Heart left ventricle (tissue), 16 donors: ENCODE measurements at regions of chr1 and their contacts with region 1.

Region 1: GRCh38 chr1:103025858-103026409 is 82.4 kb downstream of the COL11A1 start:
- DNase-seq: no peak
- ATAC-seq: no peak
- H3K4me3 ChIP-seq: no peak overlapping the region
- H3K27ac ChIP-seq: no peak overlapping the region
- H3K4me1 ChIP-seq: no peaks in the 10 kb centered on the region
- H3K27me3 ChIP-seq: no peaks in the 10 kb centered on the region
- CTCF ChIP-seq: no peak
- POLR2A ChIP-seq: no peak

Region 2: DNA sequence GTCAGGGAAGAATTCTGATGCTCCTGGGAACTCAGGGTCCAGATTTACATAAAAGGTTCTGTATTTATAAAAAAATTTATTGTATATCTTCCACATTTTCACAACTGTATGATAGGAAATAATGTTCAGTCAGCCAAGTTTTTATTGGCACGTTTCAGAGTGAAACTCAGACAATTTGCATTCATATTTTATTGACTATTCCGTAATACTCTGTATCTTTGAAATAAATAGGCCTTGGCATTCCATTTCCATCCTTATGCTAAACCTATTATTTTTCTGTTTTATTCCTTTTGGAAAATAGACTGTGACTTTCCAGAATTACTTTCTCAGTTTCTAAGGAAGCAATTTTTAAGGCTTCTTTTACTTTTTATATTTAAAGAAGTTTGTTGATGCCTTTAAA is 1358.2 kb before region 1 on chr1:
- intact Hi-C with region 1: loop called in 1 of 10 experiments (anchors 10 kb)
- DNase-seq: no peak
- ATAC-seq: no peak
- H3K4me3 ChIP-seq: no peak overlapping the region
- H3K27ac ChIP-seq: no peak overlapping the region
- H3K4me1 ChIP-seq: no peaks in the 10 kb centered on the region
- H3K27me3 ChIP-seq: no peaks in the 10 kb centered on the region
- CTCF ChIP-seq: no peak
- POLR2A ChIP-seq: no peak

Region 3: GRCh38 chr1:102742426-102742825 is 283.5 kb before region 1 on chr1:
- intact Hi-C with region 1: no loop called
- DNase-seq: no peak
- ATAC-seq: no peak
- H3K4me3 ChIP-seq: no peak overlapping the region
- H3K27ac ChIP-seq: no peak overlapping the region
- H3K4me1 ChIP-seq: no peaks in the 10 kb centered on the region
- H3K27me3 ChIP-seq: no peaks in the 10 kb centered on the region
- CTCF ChIP-seq: no peak
- POLR2A ChIP-seq: no peak

Region 4: GRCh38 chr1:102941377-102941798 is 84.5 kb before region 1 on chr1:
- intact Hi-C with region 1: no loop called
- DNase-seq: no peak
- ATAC-seq: no peak
- H3K4me3 ChIP-seq: no peak overlapping the region
- H3K27ac ChIP-seq: no peak overlapping the region
- H3K4me1 ChIP-seq: no peaks in the 10 kb centered on the region
- H3K27me3 ChIP-seq: no peaks in the 10 kb centered on the region
- CTCF ChIP-seq: no peak
- POLR2A ChIP-seq: no peak

Region 5: GRCh38 chr1:103087256-103087655 is 61.3 kb after region 1 on chr1:
- intact Hi-C with region 1: no loop called
- DNase-seq: no peak
- ATAC-seq: no peak
- H3K4me3 ChIP-seq: no peak overlapping the region
- H3K27ac ChIP-seq: no peak overlapping the region
- H3K4me1 ChIP-seq: no peaks in the 10 kb centered on the region
- H3K27me3 ChIP-seq: no peaks in the 10 kb centered on the region
- CTCF ChIP-seq: no peak
- POLR2A ChIP-seq: no peak

Region 6: DNA sequence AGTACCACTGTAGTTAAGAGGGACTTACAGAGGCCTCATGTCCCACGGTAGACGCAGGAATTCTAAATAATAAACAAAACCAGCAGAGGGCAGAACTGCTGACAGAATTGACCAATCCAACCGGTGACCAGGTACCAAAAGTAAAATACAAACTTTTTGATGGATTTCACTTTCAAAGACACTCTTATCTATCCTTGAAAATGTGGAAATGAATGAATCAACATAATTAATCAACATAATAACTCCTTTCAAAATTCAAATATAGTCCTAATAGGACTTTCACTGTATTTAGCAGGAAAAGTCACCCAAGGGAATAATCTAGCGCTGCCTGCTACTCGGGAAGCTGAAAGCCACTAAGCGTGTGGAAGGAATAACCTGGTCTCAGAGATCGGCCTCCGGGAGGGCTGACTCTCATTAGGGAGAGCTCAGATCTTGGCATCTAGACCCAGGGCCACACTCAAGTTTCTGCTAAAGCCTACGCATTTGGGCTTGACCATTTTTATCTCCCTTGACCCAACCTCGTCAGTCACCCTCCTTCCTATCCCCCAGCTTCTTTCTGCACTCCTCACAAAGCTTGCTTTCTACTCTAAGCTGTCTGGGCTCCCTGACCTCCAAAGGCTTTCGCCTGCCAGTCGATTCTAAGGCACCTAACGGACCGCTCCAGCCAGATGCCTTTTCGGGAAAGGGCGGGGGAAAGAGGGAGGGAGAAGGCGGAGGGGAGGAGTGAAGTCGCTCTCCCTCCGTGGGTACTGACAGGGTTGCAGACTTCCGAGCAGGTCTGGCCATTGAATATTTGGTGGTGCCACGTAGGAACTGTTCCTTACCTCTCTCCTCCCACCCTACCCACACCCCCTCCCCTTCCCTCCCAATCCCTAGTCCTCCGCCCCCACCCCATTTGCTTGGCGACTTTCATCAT is 80.8 kb after region 1 on chr1:
- intact Hi-C with region 1: no loop called
- DNase-seq: peak in 2 of 5 donors; percentile 8 to 33
- ATAC-seq: peak in 3 of 4 donors; percentile 59 to 74 (median 72)
- H3K4me3 ChIP-seq: peak overlapping the region in 11 of 12 donors; percentile 6 to 53 (median 37)
- H3K27ac ChIP-seq: no peak overlapping the region
- H3K4me1 ChIP-seq: peaks cover 0 to 21% (median 1%) of the 10 kb centered on the region in 12 donors
- H3K27me3 ChIP-seq: peaks cover 0 to 20% (median 4%) of the 10 kb centered on the region in 9 donors
- CTCF ChIP-seq: peak; percentile 20 to 62 (median 44)
- POLR2A ChIP-seq: no peak